Colonic mucosa (tissue), 4 donors: ENCODE measurements at regions of chr2 and their contacts with region 1.

Region 1: DNA sequence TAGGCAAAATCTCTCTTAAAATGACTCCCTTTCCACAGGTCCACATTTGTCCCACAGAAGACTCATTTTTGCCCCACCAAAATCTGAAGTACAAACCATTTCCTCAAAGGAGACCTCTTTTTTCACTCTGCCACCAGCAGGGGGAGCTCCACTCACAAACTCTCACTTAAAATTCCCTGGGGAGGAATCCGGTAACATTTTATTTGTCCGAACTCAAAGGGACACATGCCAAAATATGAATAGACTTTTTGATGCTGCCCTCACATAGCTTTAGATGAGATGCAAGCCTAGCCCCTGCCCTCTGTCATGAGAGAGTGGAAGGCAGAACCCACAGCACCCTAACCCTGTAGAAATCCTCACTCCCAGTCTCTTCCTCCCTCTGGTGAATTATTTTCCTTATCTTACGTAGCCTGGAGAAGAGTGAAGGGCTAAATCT is 57.1 kb downstream of the RMDN2 start:
- DNase-seq: peak; percentile 73
- H3K4me3 ChIP-seq: no peak overlapping the region
- H3K27ac ChIP-seq: no peak overlapping the region
- H3K4me1 ChIP-seq: no peaks in the 10 kb centered on the region
- H3K27me3 ChIP-seq: no peaks in the 10 kb centered on the region
- CTCF ChIP-seq: peak; percentile 80

Region 2: GRCh38 chr2:37890893-37891495 is 91.2 kb before region 1 on chr2:
- intact Hi-C with region 1: loop called (anchors 5 kb)
- DNase-seq: peak; percentile 86
- H3K4me3 ChIP-seq: no peak overlapping the region
- H3K27ac ChIP-seq: no peak overlapping the region
- H3K4me1 ChIP-seq: no peaks in the 10 kb centered on the region
- H3K27me3 ChIP-seq: no peaks in the 10 kb centered on the region
- CTCF ChIP-seq: peak; percentile 70

Region 3: GRCh38 chr2:38115216-38116032 is 133.3 kb after region 1 on chr2:
- intact Hi-C with region 1: loop called (anchors 10 kb)
- DNase-seq: peak; percentile 90
- H3K4me3 ChIP-seq: no peak overlapping the region
- H3K27ac ChIP-seq: no peak overlapping the region
- H3K4me1 ChIP-seq: no peaks in the 10 kb centered on the region
- H3K27me3 ChIP-seq: no peaks in the 10 kb centered on the region
- CTCF ChIP-seq: peak; percentile 90

Region 4: DNA sequence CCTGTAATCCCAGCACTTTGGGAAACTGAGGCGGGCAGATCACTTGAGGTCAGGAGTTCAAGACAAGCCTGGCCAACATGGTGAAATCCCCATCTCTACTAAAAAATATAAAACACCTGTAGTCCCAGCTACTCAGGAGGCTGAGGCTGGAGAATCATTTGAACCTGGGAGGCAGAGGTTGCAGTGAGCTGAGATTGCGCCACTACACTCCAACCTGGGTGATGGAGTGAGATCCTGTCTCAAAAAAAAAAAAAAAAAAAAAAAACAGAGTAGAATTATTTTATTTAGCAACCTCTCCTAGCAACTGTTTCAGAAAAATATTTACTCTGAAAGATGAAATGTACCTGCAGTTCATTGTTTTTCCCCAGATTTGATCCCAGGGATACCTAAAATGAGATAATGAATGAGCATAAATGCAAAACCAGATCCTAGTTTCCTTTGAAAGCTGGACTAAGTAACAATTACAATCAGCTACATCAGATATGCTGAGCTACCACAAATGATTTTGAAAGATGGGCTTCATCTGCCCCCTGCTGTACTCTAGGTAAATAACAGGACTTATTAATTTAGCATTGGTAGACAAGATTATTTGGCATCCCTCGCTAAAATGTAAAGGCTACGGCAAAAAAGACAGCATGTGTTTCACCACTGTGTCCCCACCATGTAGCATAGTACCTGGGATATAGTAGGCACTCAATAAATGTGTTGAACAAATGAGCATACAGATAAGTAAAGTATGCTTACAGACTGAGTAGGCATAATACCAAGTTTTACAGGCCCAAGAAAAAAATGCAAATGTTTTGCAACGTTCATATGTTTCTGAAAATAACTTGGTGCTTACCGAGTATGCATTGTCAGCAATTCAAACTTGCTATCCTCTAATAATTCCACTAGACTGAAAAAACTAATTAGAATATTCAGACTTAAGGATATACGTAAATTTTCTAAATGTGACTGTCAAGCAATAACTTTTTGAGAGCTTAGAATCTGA is 292.4 kb after region 1 on chr2:
- intact Hi-C with region 1: loop called (anchors 2 kb)
- DNase-seq: no peak
- H3K4me3 ChIP-seq: no peak overlapping the region
- H3K27ac ChIP-seq: no peak overlapping the region
- H3K4me1 ChIP-seq: no peaks in the 10 kb centered on the region
- H3K27me3 ChIP-seq: no peaks in the 10 kb centered on the region
- CTCF ChIP-seq: peak; percentile 35